ENCODE measurements at regions of chr16 and their contacts with region 1.

Region 1: DNA sequence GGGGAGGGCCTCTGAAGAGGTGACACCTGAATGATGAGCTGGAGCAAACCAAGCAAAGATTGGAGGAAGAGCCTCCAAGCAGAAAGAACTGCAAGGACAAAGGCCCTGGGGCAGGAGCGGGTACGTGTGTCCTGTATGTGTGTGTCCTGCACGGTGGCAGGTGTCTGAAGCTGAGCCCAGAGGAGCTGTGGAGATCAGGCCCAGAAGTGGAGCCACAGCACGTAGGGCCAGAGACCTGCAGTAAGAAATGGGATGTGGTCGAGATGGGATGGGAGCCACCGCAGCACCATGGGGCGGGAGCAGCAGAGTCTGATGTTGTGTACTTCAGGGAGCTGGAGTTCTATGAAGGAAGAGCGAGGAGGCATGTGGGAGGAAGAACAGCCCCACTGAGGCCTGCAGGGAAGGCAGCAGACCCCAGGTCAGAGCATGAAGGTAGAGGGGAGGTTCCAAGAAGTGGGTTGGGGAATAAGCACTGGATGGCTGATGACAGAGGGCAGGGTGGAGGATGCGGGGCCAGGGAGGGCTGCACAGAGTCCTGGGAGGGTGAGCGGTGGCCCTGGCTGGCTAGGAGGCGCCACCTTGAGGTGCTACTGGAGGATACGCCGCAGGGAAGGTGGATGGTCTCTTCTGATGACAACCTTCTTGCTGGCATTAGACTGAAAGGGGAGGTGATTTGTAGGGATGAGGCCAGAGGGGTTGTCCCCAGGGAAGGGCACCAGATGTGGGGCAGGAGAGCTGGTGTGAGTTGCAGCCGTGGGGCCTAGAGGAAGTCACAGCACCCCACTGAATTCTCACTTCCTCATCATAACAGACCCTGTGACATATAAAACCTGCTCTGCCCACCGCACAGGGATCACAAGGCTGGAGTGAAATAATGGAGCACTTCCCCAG is 10.6 kb upstream of the CETP start:
- DNase-seq: peak; percentile 75
- ATAC-seq: peak; percentile 89
- H3K4me3 ChIP-seq: no peak overlapping the region
- H3K27ac ChIP-seq: no peak overlapping the region
- H3K4me1 ChIP-seq: peaks cover 4% of the 10 kb centered on the region
- H3K27me3 ChIP-seq: no peaks in the 10 kb centered on the region
- CTCF ChIP-seq: peak; percentile 62

Region 2: DNA sequence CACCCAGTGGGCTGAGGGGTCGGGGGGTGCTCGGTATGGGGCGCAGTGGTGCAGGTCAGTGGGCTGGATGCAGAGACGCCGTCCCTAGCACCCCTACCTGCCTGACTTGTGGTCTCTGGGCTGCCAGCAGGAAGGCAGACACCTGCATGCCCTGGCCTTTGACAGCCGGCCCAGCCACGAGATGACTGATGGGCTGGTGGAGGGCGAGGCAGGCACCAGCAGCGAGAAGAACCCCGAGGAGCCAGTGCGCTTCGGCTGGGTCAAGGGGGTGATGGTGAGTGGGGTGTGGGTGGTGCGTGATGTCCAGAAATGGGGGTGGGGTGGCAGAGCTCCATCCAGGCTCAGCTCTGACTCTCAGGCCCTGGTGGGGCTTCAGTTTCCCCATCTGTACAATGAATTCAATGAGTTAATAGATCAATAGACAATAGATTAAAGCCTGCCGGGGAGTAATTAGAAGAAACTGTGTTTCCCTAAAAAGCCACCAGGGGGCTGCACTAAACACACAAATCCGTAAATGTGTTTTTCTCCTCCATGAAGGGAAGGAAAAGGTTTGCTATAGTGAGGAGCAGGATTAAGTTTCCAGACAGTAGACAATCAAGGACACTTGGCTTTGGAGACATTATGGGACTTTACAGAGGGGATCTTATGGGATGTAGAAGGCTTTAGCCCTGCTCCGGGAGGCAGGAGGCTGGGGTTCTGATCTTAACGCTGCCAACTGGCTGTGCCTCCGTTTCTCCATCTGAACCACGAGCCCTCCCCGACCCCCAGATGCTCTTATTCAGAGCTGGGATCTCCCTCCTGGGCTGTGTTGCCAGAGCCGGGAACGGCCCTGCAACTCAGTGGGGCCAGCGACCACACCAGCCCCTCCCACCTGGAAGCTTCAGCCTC is 83.9 kb before region 1 on chr16:
- intact Hi-C with region 1: loop called (anchors 10 kb)
- DNase-seq: no peak
- ATAC-seq: peak; percentile 47
- H3K4me3 ChIP-seq: no peak overlapping the region
- H3K27ac ChIP-seq: no peak overlapping the region
- H3K4me1 ChIP-seq: peaks cover 7% of the 10 kb centered on the region
- H3K27me3 ChIP-seq: no peaks in the 10 kb centered on the region
- CTCF ChIP-seq: peak; percentile 83